Caco-2 (cell line): ENCODE measurements at regions of chr10 and their contacts with region 1.

Region 1: GRCh38 chr10:14578060-14578952 is 196.4 kb downstream of the FAM107B start:
- DNase-seq: peak; percentile 89 to 92
- H3K4me3 ChIP-seq: peak overlapping the region; percentile 24
- H3K4me3 Mint-ChIP-seq: peak overlapping the region; percentile 70
- H3K27ac Mint-ChIP-seq: peak overlapping the region; percentile 88
- H3K4me1 ChIP-seq: peaks cover 66% of the 10 kb centered on the region
- H3K4me1 Mint-ChIP-seq: peaks cover 38% of the 10 kb centered on the region
- H3K27me3 ChIP-seq: no peaks in the 10 kb centered on the region
- H3K27me3 Mint-ChIP-seq: no peaks in the 10 kb centered on the region
- CTCF ChIP-seq: no peak

Region 2: GRCh38 chr10:13993169-13993568 is 585.1 kb before region 1 on chr10:
- CTCF ChIA-PET with region 1: no interaction called
- POLR2A ChIA-PET with region 1: no interaction called
- intact Hi-C with region 1: no loop called
- DNase-seq: no peak
- H3K4me3 ChIP-seq: no peak overlapping the region
- H3K4me3 Mint-ChIP-seq: no peak overlapping the region
- H3K27ac Mint-ChIP-seq: no peak overlapping the region
- H3K4me1 ChIP-seq: no peaks in the 10 kb centered on the region
- H3K4me1 Mint-ChIP-seq: no peaks in the 10 kb centered on the region
- H3K27me3 ChIP-seq: no peaks in the 10 kb centered on the region
- H3K27me3 Mint-ChIP-seq: peaks cover 3% of the 10 kb centered on the region
- CTCF ChIP-seq: no peak

Region 3: GRCh38 chr10:14543046-14543903 is 35.0 kb before region 1 on chr10:
- CTCF ChIA-PET with region 1: no interaction called
- POLR2A ChIA-PET with region 1: interaction called, 3 read pairs
- intact Hi-C with region 1: loop called (anchors 1 kb)
- DNase-seq: no peak
- H3K4me3 ChIP-seq: no peak overlapping the region
- H3K4me3 Mint-ChIP-seq: no peak overlapping the region
- H3K27ac Mint-ChIP-seq: peak overlapping the region; percentile 59
- H3K4me1 ChIP-seq: peaks cover 42% of the 10 kb centered on the region
- H3K4me1 Mint-ChIP-seq: peaks cover 52% of the 10 kb centered on the region
- H3K27me3 ChIP-seq: no peaks in the 10 kb centered on the region
- H3K27me3 Mint-ChIP-seq: no peaks in the 10 kb centered on the region
- CTCF ChIP-seq: peak in 1 of 2 experiments; percentile 45

Region 4: GRCh38 chr10:14556285-14556956 is 21.9 kb before region 1 on chr10:
- CTCF ChIA-PET with region 1: interaction called, 8 read pairs
- POLR2A ChIA-PET with region 1: interaction called, 11 read pairs
- intact Hi-C with region 1: loop called (anchors 1 kb)
- DNase-seq: peak; percentile 76 to 79
- H3K4me3 ChIP-seq: no peak overlapping the region
- H3K4me3 Mint-ChIP-seq: peak overlapping the region; percentile 5
- H3K27ac Mint-ChIP-seq: peak overlapping the region; percentile 58
- H3K4me1 ChIP-seq: peaks cover 79% of the 10 kb centered on the region
- H3K4me1 Mint-ChIP-seq: peaks cover 75% of the 10 kb centered on the region
- H3K27me3 ChIP-seq: no peaks in the 10 kb centered on the region
- H3K27me3 Mint-ChIP-seq: no peaks in the 10 kb centered on the region
- CTCF ChIP-seq: peak; percentile 47 to 81

Region 5: GRCh38 chr10:14653271-14654228 is 75.2 kb after region 1 on chr10:
- CTCF ChIA-PET with region 1: no interaction called
- POLR2A ChIA-PET with region 1: interaction called, 3 read pairs
- intact Hi-C with region 1: loop called (anchors 1 kb)
- DNase-seq: peak; percentile 78 to 88
- H3K4me3 ChIP-seq: no peak overlapping the region
- H3K4me3 Mint-ChIP-seq: peak overlapping the region; percentile 68
- H3K27ac Mint-ChIP-seq: peak overlapping the region; percentile 99
- H3K4me1 ChIP-seq: peaks cover 40% of the 10 kb centered on the region
- H3K4me1 Mint-ChIP-seq: peaks cover 32% of the 10 kb centered on the region
- H3K27me3 ChIP-seq: no peaks in the 10 kb centered on the region
- H3K27me3 Mint-ChIP-seq: no peaks in the 10 kb centered on the region
- CTCF ChIP-seq: no peak

Region 6: GRCh38 chr10:14737808-14738545 is 159.7 kb after region 1 on chr10:
- CTCF ChIA-PET with region 1: no interaction called
- POLR2A ChIA-PET with region 1: no interaction called
- intact Hi-C with region 1: loop called (anchors 1 kb)
- DNase-seq: peak; percentile 81 to 86
- H3K4me3 ChIP-seq: no peak overlapping the region
- H3K4me3 Mint-ChIP-seq: peak overlapping the region; percentile 1
- H3K27ac Mint-ChIP-seq: peak overlapping the region; percentile 27
- H3K4me1 ChIP-seq: peaks cover 56% of the 10 kb centered on the region
- H3K4me1 Mint-ChIP-seq: peaks cover 36% of the 10 kb centered on the region
- H3K27me3 ChIP-seq: no peaks in the 10 kb centered on the region
- H3K27me3 Mint-ChIP-seq: no peaks in the 10 kb centered on the region
- CTCF ChIP-seq: no peak

Region 7: GRCh38 chr10:14837757-14838581 is 259.7 kb after region 1 on chr10 and contains the starts of genes CDNF, HSPA14 and MSANTD7:
- CTCF ChIA-PET with region 1: interaction called, 5 read pairs
- POLR2A ChIA-PET with region 1: interaction called, 23 read pairs
- intact Hi-C with region 1: loop called (anchors 5 kb)
- DNase-seq: peak; percentile 100
- H3K4me3 ChIP-seq: peak within 1 kb of the TSS; percentile 91
- H3K4me3 Mint-ChIP-seq: peak within 1 kb of the TSS; percentile 70
- H3K27ac Mint-ChIP-seq: peak within 1 kb of the TSS; percentile 91
- H3K4me1 ChIP-seq: no peaks in the 10 kb centered on the region; the same call in 1 of the 2 replicates
- H3K4me1 Mint-ChIP-seq: peaks cover 15% of the 10 kb centered on the region
- H3K27me3 ChIP-seq: no peaks in the 10 kb centered on the region
- H3K27me3 Mint-ChIP-seq: no peaks in the 10 kb centered on the region
- CTCF ChIP-seq: no peak
- total RNA-seq, gene CDNF: 3.4 and 3.9 TPM in 2 replicates
- total RNA-seq, gene HSPA14: 36.9 and 39.3 TPM in 2 replicates
- total RNA-seq, gene MSANTD7: 30.0 and 32.8 TPM in 2 replicates